ENCODE measurements at regions of chr6 and their contacts with region 1.

Region 1: GRCh38 chr6:116500969-116501433 is 10.4 kb upstream of the CALHM5 start:
- DNase-seq: no peak
- H3K4me3 ChIP-seq: no peak overlapping the region
- H3K27ac ChIP-seq: no peak overlapping the region
- H3K4me1 ChIP-seq: peaks cover 0 to 4% (median 0%) of the 10 kb centered on the region in 4 experiments; a peak in 1 of 7 replicates
- H3K27me3 ChIP-seq: no peaks in the 10 kb centered on the region
- CTCF ChIP-seq: no peak
- EP300 ChIP-seq: no peak
- POLR2A ChIP-seq: no peak
- RAD21 ChIP-seq: no peak

Region 2: DNA sequence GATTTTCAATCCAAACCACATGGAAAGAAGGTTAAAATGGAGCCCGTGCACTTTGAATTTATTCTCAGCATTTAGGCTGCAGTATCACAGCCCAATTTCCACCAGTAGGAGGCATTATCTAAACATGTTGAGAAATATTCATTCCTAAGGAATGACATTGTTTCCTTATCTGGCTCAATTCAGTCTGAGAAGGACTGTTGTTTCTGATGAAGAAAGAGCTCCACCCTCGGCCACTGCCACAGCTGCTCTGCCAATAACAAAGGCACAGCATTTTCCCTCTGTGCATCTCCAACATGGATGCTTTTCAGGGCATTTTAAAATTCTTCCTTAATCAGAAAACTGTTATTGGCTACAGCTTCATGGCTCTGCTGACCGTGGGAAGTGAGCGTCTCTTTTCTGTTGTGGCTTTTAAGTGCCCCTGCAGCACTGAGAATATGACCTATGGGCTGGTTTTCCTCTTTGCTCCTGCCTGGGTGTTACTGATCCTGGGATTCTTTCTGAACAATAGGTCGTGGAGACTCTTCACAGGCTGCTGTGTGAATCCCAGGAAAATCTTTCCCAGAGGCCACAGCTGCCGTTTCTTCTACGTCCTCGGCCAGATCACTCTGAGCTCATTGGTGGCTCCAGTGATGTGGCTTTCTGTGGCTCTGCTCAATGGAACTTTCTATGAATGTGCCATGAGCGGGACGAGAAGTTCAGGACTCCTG is 10.6 kb after region 1 on chr6 and contains the start of gene CALHM5:
- CTCF ChIA-PET with region 1: interaction called, 20 read pairs
- POLR2A ChIA-PET with region 1: no interaction called
- DNase-seq: no peak
- H3K4me3 ChIP-seq: no peak within 1 kb of the TSS
- H3K27ac ChIP-seq: peak within 1 kb of the TSS; percentile 31; the same call in 1 of the 2 replicates
- H3K4me1 ChIP-seq: peaks cover 0 to 11% (median 4%) of the 10 kb centered on the region in 4 experiments; a peak in 4 of 7 replicates
- H3K27me3 ChIP-seq: peaks cover 0 to 1% (median 0%) of the 10 kb centered on the region in 4 experiments; a peak in 1 of 7 replicates
- CTCF ChIP-seq: peak in 2 of 3 experiments; percentile 38 to 66; a peak in 2 of 4 replicates
- EP300 ChIP-seq: no peak
- POLR2A ChIP-seq: no peak
- RAD21 ChIP-seq: peak; percentile 30 to 44
- total RNA-seq, gene CALHM5: 0.09 and 0.17 TPM in 2 replicates

Measured in H1 (cell line).